Posterior cingulate gyrus (tissue), 11 donors: ENCODE measurements at regions of chr6 and their contacts with region 1.

Region 1: GRCh38 chr6:2634139-2634964 is 116.4 kb downstream of the MYLK4 start:
- DNase-seq: peak; percentile 64 to 97 (median 82)

Region 2: DNA sequence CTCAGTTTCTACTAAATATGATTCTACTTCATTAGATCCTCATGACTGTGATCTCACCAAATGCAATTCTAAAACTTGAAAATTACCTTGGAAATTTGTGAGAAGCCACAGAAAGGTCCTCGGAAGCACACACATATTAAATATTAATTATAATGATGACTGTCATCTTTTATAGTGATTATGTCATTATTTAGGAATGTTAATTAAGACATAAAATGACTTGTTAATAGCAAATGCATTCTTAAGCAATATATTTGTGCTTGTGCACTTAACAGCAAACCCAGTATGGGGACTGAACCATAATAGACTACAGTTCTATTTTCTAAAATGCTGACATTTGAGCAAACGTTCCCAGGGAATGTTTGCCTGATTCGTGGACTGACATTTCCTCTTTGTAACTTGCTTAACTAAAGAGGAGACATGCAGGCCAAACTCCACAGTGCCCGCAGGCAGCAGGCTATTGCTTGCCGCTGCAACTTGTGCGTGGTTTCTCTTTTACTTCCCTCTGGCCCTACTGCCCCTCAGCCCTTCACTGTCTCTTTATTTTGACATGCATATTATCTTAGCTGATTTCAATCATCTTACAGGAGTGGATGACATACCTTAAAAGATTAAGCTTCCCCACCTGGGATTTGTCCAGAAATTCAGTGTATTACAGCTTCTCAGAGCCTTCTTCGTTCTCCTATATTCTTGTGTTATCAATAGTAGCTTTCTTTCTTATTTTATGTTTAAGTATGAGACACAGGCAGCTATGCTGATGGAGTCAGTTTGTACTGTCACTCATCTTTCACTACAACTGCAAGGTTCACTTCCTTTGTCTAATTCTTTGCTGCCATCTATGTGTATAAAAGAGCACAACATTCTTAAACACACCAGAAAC is 530.5 kb before region 1 on chr6:
- intact Hi-C with region 1: loop called (anchors 10 kb)
- DNase-seq: no peak